B cell (primary cell): ENCODE measurements at regions of chr1 and their contacts with region 1.

Region 1: GRCh38 chr1:175373786-175374623 is 181.4 kb upstream of the KIAA0040 start:
- DNase-seq: peak; percentile 41
- ATAC-seq: no peak
- H3K4me3 ChIP-seq: no peak overlapping the region
- H3K4me3 Mint-ChIP-seq: no peak overlapping the region
- H3K27ac ChIP-seq: no peak overlapping the region
- H3K27ac Mint-ChIP-seq: no peak overlapping the region
- H3K4me1 ChIP-seq: no peaks in the 10 kb centered on the region
- H3K4me1 Mint-ChIP-seq: no peaks in the 10 kb centered on the region
- H3K27me3 ChIP-seq: no peaks in the 10 kb centered on the region
- H3K27me3 Mint-ChIP-seq: peaks cover 2% of the 10 kb centered on the region
- CTCF ChIP-seq: peak; percentile 71

Region 2: GRCh38 chr1:174344162-174344561 is 1029.8 kb before region 1 on chr1:
- CTCF ChIA-PET with region 1: no interaction called
- POLR2A ChIA-PET with region 1: no interaction called
- intact Hi-C with region 1: no loop called
- DNase-seq: no peak
- ATAC-seq: no peak
- H3K4me3 ChIP-seq: no peak overlapping the region
- H3K4me3 Mint-ChIP-seq: no peak overlapping the region
- H3K27ac ChIP-seq: peak overlapping the region in 1 of 2 donors; percentile 47
- H3K27ac Mint-ChIP-seq: peak overlapping the region; percentile 2
- H3K4me1 ChIP-seq: peaks cover 0 to 10% of the 10 kb centered on the region in 2 donors
- H3K4me1 Mint-ChIP-seq: peaks cover 21% of the 10 kb centered on the region
- H3K27me3 ChIP-seq: no peaks in the 10 kb centered on the region
- H3K27me3 Mint-ChIP-seq: no peaks in the 10 kb centered on the region
- CTCF ChIP-seq: no peak

Region 3: DNA sequence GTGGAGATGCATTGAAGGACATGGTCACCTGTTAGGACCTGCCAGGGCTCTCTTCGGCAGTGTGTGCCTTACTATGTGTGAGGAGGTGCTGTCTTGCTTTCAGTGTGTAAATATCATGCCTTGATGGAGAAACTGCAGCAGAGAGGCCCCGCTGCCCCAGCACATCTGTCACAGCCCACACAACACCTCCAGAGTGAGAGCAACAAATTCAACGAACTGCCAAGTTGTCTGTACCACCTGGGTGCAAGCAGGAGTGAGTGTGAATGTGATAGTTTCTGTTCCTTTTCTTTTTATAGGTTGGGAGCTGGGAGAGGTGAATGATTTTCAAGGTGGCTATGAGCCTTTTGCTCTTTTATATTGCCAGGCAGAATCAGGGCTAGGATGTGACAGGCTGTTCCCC is 66.8 kb before region 1 on chr1:
- CTCF ChIA-PET with region 1: no interaction called
- POLR2A ChIA-PET with region 1: no interaction called
- intact Hi-C with region 1: no loop called
- DNase-seq: peak; percentile 40
- ATAC-seq: peak; percentile 66
- H3K4me3 ChIP-seq: no peak overlapping the region
- H3K4me3 Mint-ChIP-seq: peak overlapping the region; percentile 29
- H3K27ac ChIP-seq: no peak overlapping the region
- H3K27ac Mint-ChIP-seq: peak overlapping the region; percentile 51
- H3K4me1 ChIP-seq: peaks cover 24 to 26% of the 10 kb centered on the region in 2 donors
- H3K4me1 Mint-ChIP-seq: peaks cover 35% of the 10 kb centered on the region
- H3K27me3 ChIP-seq: no peaks in the 10 kb centered on the region
- H3K27me3 Mint-ChIP-seq: no peaks in the 10 kb centered on the region
- CTCF ChIP-seq: no peak

Region 4: GRCh38 chr1:175449306-175449705 is 75.3 kb after region 1 on chr1:
- CTCF ChIA-PET with region 1: no interaction called
- POLR2A ChIA-PET with region 1: no interaction called
- intact Hi-C with region 1: no loop called
- DNase-seq: no peak
- ATAC-seq: no peak
- H3K4me3 ChIP-seq: no peak overlapping the region
- H3K4me3 Mint-ChIP-seq: no peak overlapping the region
- H3K27ac ChIP-seq: no peak overlapping the region
- H3K27ac Mint-ChIP-seq: no peak overlapping the region
- H3K4me1 ChIP-seq: no peaks in the 10 kb centered on the region
- H3K4me1 Mint-ChIP-seq: peaks cover 10% of the 10 kb centered on the region
- H3K27me3 ChIP-seq: no peaks in the 10 kb centered on the region
- H3K27me3 Mint-ChIP-seq: no peaks in the 10 kb centered on the region
- CTCF ChIP-seq: no peak

Region 5: DNA sequence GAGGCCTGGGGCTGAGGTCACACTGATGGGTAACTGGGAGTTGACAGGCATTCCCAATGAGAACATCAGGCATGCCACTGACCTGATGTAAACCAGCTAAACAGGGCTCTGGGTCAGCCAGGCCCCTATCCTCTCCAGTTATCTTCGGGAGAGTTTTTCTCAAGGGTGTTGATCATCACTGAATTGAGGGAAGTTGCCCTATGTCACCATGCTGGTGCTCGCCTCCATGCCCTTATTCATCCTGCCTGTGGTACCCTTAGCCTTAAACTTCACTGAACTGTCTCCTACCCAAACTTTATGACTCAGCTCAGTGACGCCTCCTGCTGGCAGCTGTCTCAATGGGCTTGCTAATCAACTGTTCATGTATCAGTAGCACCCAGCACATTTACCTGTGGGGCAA is 450.1 kb after region 1 on chr1:
- CTCF ChIA-PET with region 1: interaction called, 3 read pairs
- POLR2A ChIA-PET with region 1: no interaction called
- intact Hi-C with region 1: loop called (anchors 5 kb)
- DNase-seq: peak; percentile 18
- ATAC-seq: no peak
- H3K4me3 ChIP-seq: no peak overlapping the region
- H3K4me3 Mint-ChIP-seq: no peak overlapping the region
- H3K27ac ChIP-seq: no peak overlapping the region
- H3K27ac Mint-ChIP-seq: no peak overlapping the region
- H3K4me1 ChIP-seq: no peaks in the 10 kb centered on the region
- H3K4me1 Mint-ChIP-seq: no peaks in the 10 kb centered on the region
- H3K27me3 ChIP-seq: no peaks in the 10 kb centered on the region
- H3K27me3 Mint-ChIP-seq: peaks cover 24% of the 10 kb centered on the region
- CTCF ChIP-seq: peak; percentile 21

Region 6: GRCh38 chr1:176691251-176692228 is 1317.5 kb after region 1 on chr1:
- CTCF ChIA-PET with region 1: interaction called, 5 read pairs
- POLR2A ChIA-PET with region 1: no interaction called
- intact Hi-C with region 1: loop called (anchors 5 kb)
- DNase-seq: peak; percentile 33
- ATAC-seq: no peak
- H3K4me3 ChIP-seq: no peak overlapping the region
- H3K4me3 Mint-ChIP-seq: no peak overlapping the region
- H3K27ac ChIP-seq: no peak overlapping the region
- H3K27ac Mint-ChIP-seq: no peak overlapping the region
- H3K4me1 ChIP-seq: no peaks in the 10 kb centered on the region
- H3K4me1 Mint-ChIP-seq: no peaks in the 10 kb centered on the region
- H3K27me3 ChIP-seq: no peaks in the 10 kb centered on the region
- H3K27me3 Mint-ChIP-seq: peaks cover 22% of the 10 kb centered on the region
- CTCF ChIP-seq: peak; percentile 54